ENCODE measurements at regions of chr16 and their contacts with region 1.

Region 1: DNA sequence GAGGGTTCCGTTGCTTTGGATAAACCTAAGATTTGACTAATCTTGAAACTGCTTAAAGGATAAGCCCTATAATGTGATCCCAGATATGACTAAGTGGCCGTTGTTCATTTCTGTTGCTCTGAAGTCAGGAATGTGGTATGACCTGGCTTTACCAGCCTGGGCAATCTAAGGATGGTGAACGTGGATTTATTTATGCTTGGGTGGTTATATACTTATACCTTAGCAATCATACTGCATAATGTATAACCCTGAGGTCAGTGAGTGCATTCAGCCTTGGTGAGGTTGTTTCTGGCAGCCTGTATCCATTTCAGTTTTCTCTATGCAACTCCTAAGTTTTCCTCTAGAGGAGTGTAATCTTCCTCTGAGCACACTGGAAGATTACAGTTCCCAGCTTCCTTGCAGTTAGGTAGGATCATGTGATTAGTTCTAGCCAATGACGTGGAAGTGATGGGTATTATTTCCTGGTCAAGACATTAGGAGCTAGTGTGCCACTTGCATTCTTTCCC is 41.9 kb downstream of the FTO start:
- DNase-seq: no peak
- ATAC-seq: peak; percentile 32; the same call in 1 of the 3 replicates
- H3K4me3 ChIP-seq: no peak overlapping the region
- H3K27ac ChIP-seq: no peak overlapping the region
- H3K4me1 ChIP-seq: peaks cover 38% of the 10 kb centered on the region
- H3K27me3 ChIP-seq: no peaks in the 10 kb centered on the region
- CTCF ChIP-seq: no peak
- EP300 ChIP-seq: no peak
- POLR2A ChIP-seq: no peak
- RAD21 ChIP-seq: no peak

Region 2: GRCh38 chr16:53692142-53692541 is 53.7 kb before region 1 on chr16:
- CTCF ChIA-PET with region 1: no interaction called
- POLR2A ChIA-PET with region 1: no interaction called
- in situ Hi-C with region 1: no loop called
- intact Hi-C with region 1: no loop called
- DNase-seq: no peak
- ATAC-seq: no peak
- H3K4me3 ChIP-seq: no peak overlapping the region
- H3K27ac ChIP-seq: no peak overlapping the region
- H3K4me1 ChIP-seq: no peaks in the 10 kb centered on the region
- H3K27me3 ChIP-seq: no peaks in the 10 kb centered on the region
- CTCF ChIP-seq: no peak
- EP300 ChIP-seq: no peak
- POLR2A ChIP-seq: no peak
- RAD21 ChIP-seq: no peak

Region 3: DNA sequence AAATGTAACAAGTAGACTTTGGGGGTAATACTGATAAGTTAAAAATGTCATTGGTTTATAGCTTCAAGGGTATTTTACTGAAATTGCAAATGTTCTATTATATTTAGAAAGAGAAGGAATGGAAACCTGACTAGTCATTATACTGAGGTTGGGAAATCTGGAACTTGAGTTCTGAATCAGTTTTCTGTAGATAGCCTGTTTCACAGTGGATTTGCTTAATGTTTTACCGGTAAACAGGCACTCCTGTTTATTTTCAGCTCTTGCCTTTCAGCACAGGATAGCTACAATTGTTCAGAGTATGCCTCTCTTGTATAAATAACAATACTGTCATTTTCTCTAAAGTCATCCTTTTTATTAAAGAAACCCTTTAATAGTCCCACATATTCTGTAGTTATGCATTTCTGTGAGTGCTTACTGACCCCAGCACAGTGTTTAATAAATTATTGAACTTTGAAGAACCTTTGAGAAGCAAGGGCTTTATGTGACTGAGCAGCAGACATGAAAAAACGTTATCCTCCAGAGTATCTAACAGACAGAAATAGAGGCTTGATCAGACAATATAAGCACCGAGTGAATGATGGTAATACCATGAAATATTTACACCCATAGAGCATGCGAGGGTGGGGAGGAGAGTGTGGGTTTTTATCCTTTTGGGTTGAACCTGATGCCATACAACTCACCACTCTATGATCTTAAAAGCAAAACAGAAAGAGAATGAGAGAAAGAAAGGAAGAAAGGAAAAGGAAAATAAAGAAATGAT is 16.3 kb after region 1 on chr16:
- CTCF ChIA-PET with region 1: no interaction called
- POLR2A ChIA-PET with region 1: interaction called, 3 read pairs
- in situ Hi-C with region 1: no loop called
- intact Hi-C with region 1: loop called (anchors 2 kb)
- DNase-seq: peak; percentile 71
- ATAC-seq: peak; percentile 68
- H3K4me3 ChIP-seq: peak overlapping the region in 2 of 3 experiments; percentile 7 to 8; a peak in 2 of 6 replicates
- H3K27ac ChIP-seq: peak overlapping the region; percentile 74
- H3K4me1 ChIP-seq: peaks cover 96% of the 10 kb centered on the region
- H3K27me3 ChIP-seq: no peaks in the 10 kb centered on the region
- CTCF ChIP-seq: no peak
- EP300 ChIP-seq: peak in 1 of 2 experiments; percentile 47; a peak in 1 of 4 replicates
- POLR2A ChIP-seq: no peak
- RAD21 ChIP-seq: no peak